Psoas muscle (tissue), 8 donors: ENCODE measurements at regions of chr15 and their contacts with region 1.

Region 1: GRCh38 chr15:47196057-47196456 is 521.2 kb upstream of the SEMA6D start:
- DNase-seq: peak; percentile 80 to 86
- ATAC-seq: peak; percentile 97 to 100 (median 98)
- H3K4me3 ChIP-seq: no peak overlapping the region
- H3K27ac ChIP-seq: no peak overlapping the region
- H3K4me1 ChIP-seq: no peaks in the 10 kb centered on the region
- H3K27me3 ChIP-seq: no peaks in the 10 kb centered on the region
- CTCF ChIP-seq: peak; percentile 85

Region 2: GRCh38 chr15:47618241-47618640 is 422.2 kb after region 1 on chr15:
- intact Hi-C with region 1: loop called in 1 of 2 experiments (anchors 5 kb)
- DNase-seq: no peak
- ATAC-seq: no peak
- H3K4me3 ChIP-seq: no peak overlapping the region
- H3K27ac ChIP-seq: no peak overlapping the region
- H3K4me1 ChIP-seq: no peaks in the 10 kb centered on the region
- H3K27me3 ChIP-seq: no peaks in the 10 kb centered on the region
- CTCF ChIP-seq: no peak

Region 3: DNA sequence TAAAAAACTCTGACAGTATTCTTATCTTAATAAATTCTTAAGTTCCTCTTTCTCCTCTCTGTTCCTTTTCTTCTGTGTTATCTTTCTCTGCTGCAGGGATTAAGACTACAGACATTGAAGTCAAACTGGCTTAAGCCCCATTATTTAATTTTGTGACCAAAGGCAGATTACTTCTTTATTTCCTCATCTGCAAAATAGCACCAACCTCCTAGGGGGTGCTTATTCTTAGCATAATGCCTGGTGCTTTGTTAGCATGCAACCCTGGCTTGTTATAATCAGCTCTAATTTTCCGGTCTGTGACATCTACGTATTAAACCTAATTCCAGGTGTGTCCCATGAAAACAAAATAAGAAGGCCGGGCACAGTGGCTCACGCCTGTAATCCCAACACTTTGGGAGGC is 545.0 kb after region 1 on chr15:
- intact Hi-C with region 1: loop called in 1 of 2 experiments (anchors 10 kb)
- DNase-seq: no peak
- ATAC-seq: no peak
- H3K4me3 ChIP-seq: no peak overlapping the region
- H3K27ac ChIP-seq: no peak overlapping the region
- H3K4me1 ChIP-seq: peaks cover 29% of the 10 kb centered on the region
- H3K27me3 ChIP-seq: no peaks in the 10 kb centered on the region
- CTCF ChIP-seq: no peak

Region 4: GRCh38 chr15:48285329-48286214 is 1089.5 kb after region 1 on chr15:
- intact Hi-C with region 1: loop called (anchors 2 to 5 kb)
- DNase-seq: no peak
- ATAC-seq: peak in 3 of 4 donors; percentile 48 to 79 (median 53)
- H3K4me3 ChIP-seq: peak overlapping the region; percentile 40
- H3K27ac ChIP-seq: no peak overlapping the region
- H3K4me1 ChIP-seq: no peaks in the 10 kb centered on the region
- H3K27me3 ChIP-seq: no peaks in the 10 kb centered on the region
- CTCF ChIP-seq: peak; percentile 71